HEK293T (cell line): ENCODE measurements at regions of chr20 and their contacts with region 1.

Region 1: DNA sequence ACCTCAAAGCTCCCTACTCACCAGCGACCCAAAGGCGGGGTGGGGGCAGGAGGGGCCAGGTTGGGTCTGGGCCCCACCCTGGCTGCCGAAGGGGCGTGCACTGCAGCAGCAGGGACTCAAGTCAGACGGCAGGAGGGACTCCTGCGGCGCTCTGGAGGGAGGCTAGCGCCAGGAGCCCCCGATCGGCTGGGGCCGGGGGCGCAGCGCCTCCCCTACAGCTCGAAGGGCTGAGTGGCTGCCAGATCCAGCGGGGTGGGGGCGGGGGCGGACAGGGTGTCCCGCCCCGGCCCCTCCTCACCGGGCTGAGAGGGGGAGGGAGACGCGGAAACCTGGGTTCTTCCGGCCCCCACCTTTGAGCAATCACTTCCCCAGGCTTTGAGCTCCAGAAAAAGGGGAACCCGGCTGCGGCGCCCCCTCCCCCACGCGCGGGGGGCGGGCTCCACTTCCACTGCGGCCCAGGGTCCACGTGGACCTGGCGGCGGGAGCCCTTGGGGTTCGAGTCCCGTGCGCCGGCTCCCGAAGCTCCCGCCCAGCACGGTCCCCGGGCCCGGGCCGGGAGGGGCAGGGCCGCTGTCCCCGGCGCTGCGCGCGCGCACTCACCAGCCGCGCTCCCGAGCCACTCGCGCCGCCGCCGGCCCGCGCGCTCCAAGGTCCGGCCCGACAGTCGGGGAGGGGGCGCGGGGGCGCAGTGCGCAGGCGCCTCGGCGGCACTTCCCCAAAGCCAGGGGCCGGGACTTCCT is at the start of gene RGS19:
- DNase-seq: peak; percentile 82

Region 2: DNA sequence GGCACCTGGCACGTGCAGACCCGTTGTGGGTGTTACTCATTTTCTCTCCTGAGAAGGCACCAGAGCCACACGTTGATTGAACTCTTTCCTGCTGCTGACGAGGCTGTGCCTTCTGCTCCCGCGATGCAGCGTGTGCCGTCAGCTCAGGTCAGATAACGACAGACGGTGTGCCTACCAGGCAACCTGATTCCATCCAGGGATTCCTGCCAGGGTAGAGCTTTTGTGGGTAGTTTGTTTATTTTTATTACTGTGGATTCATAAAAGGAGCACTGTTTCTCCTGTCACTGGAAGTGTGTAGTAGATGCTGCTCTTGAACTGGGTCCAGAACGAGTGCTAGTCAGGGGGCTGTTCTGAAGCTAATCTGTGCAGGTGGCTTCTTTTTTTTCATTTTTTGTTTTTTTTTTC is 77.8 kb before region 1 on chr20:
- CTCF ChIA-PET with region 1: no interaction called
- POLR2A ChIA-PET with region 1: no interaction called
- DNase-seq: no peak

Region 3: GRCh38 chr20:64119681-64120341 is 40.4 kb after region 1 on chr20:
- CTCF ChIA-PET with region 1: interaction called, 12 read pairs
- POLR2A ChIA-PET with region 1: interaction called, 3 read pairs
- DNase-seq: no peak

Region 4: DNA sequence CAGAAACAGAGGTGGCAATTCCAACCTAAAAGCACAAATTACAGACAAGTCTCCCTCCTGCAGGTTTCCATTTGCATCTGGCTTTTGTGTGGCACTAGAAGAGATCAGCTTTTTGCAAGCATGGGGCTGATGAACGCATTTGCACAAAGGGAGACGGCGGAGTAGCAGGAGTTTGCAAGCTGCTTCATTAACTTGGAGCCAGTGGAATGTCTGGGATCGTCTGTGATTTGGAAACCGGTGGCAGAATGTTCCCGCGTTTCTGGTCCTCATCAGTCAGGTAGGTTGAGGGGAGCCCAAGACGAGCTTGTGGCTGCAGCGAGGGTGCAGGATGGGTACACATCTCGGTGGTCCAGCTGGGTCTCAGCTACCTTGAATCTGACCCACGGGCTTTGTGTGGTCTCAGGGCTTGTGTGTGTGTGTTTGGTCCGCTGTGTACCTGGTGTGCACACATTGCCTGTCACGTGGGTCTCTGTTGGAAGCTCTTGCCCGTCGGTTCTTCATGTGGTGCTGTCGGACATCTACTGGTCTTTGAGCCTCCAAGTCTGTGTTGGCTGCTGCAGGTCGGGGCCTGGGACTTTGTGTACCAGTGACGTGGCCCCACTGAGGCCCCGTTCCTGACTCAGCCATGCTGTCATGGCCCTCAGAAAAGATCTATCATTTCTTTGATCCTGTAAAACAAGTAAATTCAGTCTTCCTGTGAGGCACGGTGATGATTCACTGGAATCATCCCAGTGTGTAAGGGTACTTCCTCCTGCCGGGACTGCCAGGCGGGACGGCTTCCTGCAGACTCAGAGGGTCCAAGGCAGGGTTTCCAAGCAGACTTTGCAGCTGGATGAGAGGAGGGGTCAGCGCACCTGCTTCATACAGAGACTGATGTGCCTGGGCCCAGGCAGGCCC is 72.4 kb after region 1 on chr20:
- CTCF ChIA-PET with region 1: no interaction called
- POLR2A ChIA-PET with region 1: no interaction called
- DNase-seq: no peak